Dorsolateral prefrontal cortex (tissue), 120 donors: ENCODE measurements at regions of chr4 and their contacts with region 1.

Region 1: DNA sequence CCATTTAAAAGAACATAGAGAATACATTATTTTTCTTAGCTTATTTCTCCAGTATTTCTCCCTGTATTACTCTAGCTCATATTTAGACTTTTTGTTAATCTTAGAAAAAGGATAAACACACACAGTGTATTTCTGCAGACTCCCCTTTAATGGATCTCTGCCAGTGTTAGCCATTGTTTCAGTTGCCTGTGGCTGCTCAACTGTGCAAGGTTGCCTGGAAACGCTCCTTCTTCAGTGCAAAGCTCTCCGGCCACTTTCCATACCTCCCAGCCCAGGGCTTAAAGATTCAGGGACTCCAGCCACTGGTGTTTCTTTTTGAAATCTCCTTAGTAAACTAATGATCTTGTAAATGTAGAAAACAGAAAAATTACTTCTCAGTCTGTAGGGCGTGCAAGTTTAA is 104.9 kb downstream of the SLIT2 start:
- DNase-seq: peak in 1 of 10 donors; percentile 21
- H3K4me3 ChIP-seq: peak overlapping the region in 41 of 59 donors; percentile 0 to 58 (median 27)
- H3K27ac ChIP-seq: peak overlapping the region in 46 of 59 donors; percentile 2 to 78 (median 50)
- H3K27me3 ChIP-seq: no peaks in the 10 kb centered on the region
- CTCF ChIP-seq: peak in 1 of 56 donors; percentile 27

Region 2: GRCh38 chr4:20323991-20324390 is 32.6 kb before region 1 on chr4:
- intact Hi-C with region 1: loop called in 1 of 2 experiments (anchors 5 kb)
- DNase-seq: no peak
- H3K4me3 ChIP-seq: no peak overlapping the region
- H3K27ac ChIP-seq: peak overlapping the region in 5 of 59 donors; percentile 15 to 96 (median 52)
- H3K27me3 ChIP-seq: no peaks in the 10 kb centered on the region
- CTCF ChIP-seq: no peak

Region 3: GRCh38 chr4:20422398-20422797 is 65.8 kb after region 1 on chr4:
- intact Hi-C with region 1: loop called in 1 of 2 experiments (anchors 10 kb)
- DNase-seq: peak in 1 of 10 donors; percentile 28
- H3K4me3 ChIP-seq: no peak overlapping the region
- H3K27ac ChIP-seq: no peak overlapping the region
- H3K27me3 ChIP-seq: no peaks in the 10 kb centered on the region
- CTCF ChIP-seq: peak; percentile 10 to 68 (median 50)